ENCODE measurements at regions of chr2 and their contacts with region 1.

Region 1: GRCh38 chr2:14634201-14634884 is 1.8 kb downstream of the LRATD1 start:
- DNase-seq: peak; percentile 61 to 97 (median 82)

Region 2: GRCh38 chr2:14501061-14501460 is 133.3 kb before region 1 on chr2:
- intact Hi-C with region 1: no loop called
- DNase-seq: no peak

Region 3: DNA sequence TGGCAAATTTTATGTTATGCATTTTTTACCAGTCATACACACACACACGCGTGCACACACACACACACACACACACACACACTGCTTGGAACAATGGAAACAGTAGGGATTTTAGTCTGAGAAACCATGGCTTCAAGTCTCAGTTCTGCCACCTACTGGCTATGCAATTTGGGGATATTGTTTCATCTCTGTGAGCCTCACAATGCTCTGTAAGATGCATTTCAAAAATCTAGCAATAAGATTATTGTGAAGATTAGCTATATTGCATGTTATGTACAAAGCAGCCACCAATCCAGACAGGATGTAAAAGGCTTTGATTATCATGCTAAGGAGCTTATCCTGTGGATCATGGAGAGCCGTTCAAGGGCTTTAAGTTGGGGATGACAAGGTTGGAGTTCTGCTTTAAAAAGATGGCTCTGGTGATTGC is 525.4 kb after region 1 on chr2:
- intact Hi-C with region 1: loop called (anchors 10 kb)
- DNase-seq: peak in 1 of 10 donors; percentile 39

Region 4: DNA sequence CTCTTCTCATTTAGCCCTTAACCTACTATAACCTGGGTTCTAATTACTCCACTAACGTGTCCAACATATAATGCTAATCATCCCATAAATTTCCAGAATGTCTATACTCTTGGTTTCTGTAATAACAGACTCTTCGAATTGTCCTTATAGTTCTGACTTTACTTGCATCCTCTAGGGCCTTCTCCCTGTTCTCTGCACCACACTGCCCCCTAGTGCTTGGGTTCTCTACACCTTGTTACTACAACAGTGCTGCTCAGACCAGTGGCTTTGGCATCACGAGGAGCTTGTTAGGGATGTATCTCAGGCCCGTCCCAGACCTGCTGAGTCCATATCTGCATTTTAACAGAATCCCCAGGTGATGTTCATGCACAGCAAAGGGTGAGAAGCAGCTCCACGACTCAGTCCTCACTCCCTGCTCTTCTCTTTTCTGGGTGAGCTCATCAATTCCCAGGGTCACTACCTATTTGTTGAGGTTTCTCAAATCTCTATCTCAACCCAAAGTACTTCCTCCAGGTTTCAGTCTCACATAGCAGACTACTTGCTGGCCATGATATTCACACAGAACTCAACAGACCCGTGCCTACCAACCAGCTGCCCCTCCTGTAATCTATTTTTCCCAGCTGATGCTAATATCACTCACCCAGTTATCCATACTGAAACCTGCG is 942.9 kb after region 1 on chr2:
- intact Hi-C with region 1: loop called (anchors 5 kb)
- DNase-seq: peak; percentile 68 to 97 (median 91)